ENCODE measurements at regions of chr9 and their contacts with region 1.

Region 1: GRCh38 chr9:38339087-38339486 is 53.4 kb upstream of the ALDH1B1 start:
- DNase-seq: peak; percentile 31
- ATAC-seq: peak; percentile 86
- H3K4me3 ChIP-seq: no peak overlapping the region
- H3K27ac ChIP-seq: no peak overlapping the region
- H3K4me1 ChIP-seq: no peaks in the 10 kb centered on the region
- H3K27me3 ChIP-seq: no peaks in the 10 kb centered on the region; a peak in 3 of 4 replicates
- CTCF ChIP-seq: no peak
- EP300 ChIP-seq: no peak
- POLR2A ChIP-seq: no peak
- RAD21 ChIP-seq: 0 out of 2 replicates have a peak, but pooled peaks have one; percentile 2

Region 2: DNA sequence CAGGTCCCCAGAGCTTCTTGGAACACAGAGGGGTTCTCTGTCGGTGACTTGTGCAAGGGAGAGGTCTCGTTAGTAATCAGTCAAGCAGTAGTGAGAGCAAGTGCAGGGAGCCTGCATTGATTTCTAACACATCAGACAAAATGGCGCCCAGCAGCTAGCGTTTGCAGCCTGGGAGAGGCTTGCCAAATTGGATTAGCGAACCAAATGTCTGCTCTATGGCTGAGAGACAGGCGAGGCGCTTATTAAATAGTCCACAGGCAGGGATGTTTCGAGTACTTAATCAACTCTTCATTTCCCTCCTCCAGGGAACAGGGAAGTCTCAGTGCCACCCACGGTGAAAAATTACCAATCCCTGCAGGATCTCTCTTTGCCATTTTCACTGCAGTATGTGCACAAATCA is 138.7 kb before region 1 on chr9:
- CTCF ChIA-PET with region 1: no interaction called
- POLR2A ChIA-PET with region 1: no interaction called
- RAD21 ChIA-PET with region 1: no interaction called
- SMC1A ChIA-PET with region 1: no interaction called
- in situ Hi-C with region 1: no loop called
- intact Hi-C with region 1: no loop called
- DNase-seq: no peak
- ATAC-seq: no peak
- H3K4me3 ChIP-seq: no peak overlapping the region
- H3K27ac ChIP-seq: no peak overlapping the region
- H3K4me1 ChIP-seq: no peaks in the 10 kb centered on the region; the same call in 1 of the 2 replicates
- H3K27me3 ChIP-seq: no peaks in the 10 kb centered on the region; a peak in 1 of 4 replicates
- CTCF ChIP-seq: no peak
- EP300 ChIP-seq: no peak
- POLR2A ChIP-seq: no peak
- RAD21 ChIP-seq: no peak

Region 3: GRCh38 chr9:38277601-38278200 is 61.4 kb before region 1 on chr9:
- CTCF ChIA-PET with region 1: no interaction called
- POLR2A ChIA-PET with region 1: no interaction called
- RAD21 ChIA-PET with region 1: no interaction called
- SMC1A ChIA-PET with region 1: no interaction called
- in situ Hi-C with region 1: loop called (anchors 10 kb)
- intact Hi-C with region 1: no loop called
- DNase-seq: no peak
- ATAC-seq: no peak; the same call in 2 of the 3 replicates
- H3K4me3 ChIP-seq: no peak overlapping the region
- H3K27ac ChIP-seq: no peak overlapping the region
- H3K4me1 ChIP-seq: no peaks in the 10 kb centered on the region
- H3K27me3 ChIP-seq: peaks cover 0 to 3% of the 10 kb centered on the region in 2 experiments; a peak in 2 of 4 replicates
- CTCF ChIP-seq: no peak
- EP300 ChIP-seq: no peak
- POLR2A ChIP-seq: no peak
- RAD21 ChIP-seq: no peak

Region 4: DNA sequence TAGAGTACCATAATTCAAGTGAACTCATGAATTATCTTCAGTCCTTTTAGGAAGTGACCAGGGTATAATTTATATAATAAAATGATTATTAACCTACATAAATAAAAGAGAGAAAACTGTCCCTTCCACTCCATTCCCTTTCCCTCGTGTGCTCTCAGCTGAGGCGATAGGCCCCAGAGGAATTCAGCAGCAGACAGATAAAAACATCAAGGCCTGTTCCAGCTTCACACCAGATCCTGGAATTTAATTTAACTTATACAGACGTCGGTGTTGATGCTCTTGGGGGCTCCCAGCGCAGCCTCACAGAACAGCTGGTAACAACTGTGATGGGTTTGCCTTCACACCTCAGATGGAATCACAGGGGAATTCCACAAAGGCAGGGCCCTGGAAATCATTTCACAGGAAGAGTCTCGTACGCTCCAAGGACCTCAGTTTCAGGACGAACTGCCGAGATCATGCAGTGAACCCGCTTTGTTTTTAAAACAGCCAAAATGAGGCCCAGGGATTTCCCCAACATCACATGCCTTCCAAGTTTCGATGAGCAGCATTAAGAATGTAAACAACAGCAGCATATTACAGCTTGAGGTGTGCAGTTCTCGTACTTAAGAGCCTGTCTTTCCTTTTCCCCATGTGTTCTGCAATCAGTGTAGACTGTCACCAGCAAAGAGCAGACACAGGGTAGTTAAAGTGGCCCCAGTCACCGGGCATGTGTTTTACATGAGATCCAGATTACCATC is 20.2 kb before region 1 on chr9:
- CTCF ChIA-PET with region 1: interaction called, 7 read pairs
- POLR2A ChIA-PET with region 1: no interaction called
- RAD21 ChIA-PET with region 1: no interaction called
- SMC1A ChIA-PET with region 1: interaction called, 17 read pairs
- in situ Hi-C with region 1: no loop called
- intact Hi-C with region 1: no loop called
- DNase-seq: peak; percentile 90
- ATAC-seq: peak; percentile 95
- H3K4me3 ChIP-seq: no peak overlapping the region
- H3K27ac ChIP-seq: peak overlapping the region; percentile 37
- H3K4me1 ChIP-seq: peaks cover 11% of the 10 kb centered on the region
- H3K27me3 ChIP-seq: no peaks in the 10 kb centered on the region; a peak in 1 of 4 replicates
- CTCF ChIP-seq: no peak
- EP300 ChIP-seq: peak; percentile 56 to 94
- POLR2A ChIP-seq: no peak
- RAD21 ChIP-seq: no peak

Region 5: DNA sequence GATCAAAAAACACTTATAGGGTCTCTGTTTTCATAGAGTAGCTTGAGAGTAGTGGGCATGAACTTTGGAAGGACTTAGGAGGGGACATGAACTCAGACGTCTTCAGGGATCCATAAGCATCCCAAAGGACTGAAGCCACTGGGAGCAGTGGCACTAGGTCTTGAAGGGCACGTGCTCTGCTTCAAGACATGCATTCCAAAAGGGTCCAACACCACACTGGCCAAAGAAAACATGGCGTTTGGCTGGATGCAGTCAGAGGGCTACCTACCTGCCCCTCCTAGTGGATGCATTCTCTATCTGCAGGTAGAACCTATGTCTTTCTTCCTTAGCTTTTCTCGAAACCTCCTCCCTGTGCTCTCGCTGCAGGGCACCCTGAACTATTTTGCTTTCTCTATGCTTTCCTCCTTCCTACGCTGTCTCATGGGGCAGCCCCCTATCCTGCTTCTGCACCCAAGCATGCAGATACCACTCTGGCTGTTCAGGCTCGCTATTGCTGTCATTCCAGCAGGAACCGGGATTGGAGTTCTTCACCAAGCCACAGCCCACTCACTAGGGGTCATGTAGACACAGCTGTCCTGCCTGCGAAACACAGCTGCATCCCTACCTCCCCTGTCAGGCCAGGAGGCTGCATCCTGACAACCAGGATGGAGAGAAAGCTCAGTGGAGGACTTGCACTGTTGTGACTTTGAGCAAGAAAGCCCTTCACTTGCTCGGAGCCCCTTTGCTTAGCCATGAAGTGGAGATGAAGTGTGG is 369.0 kb after region 1 on chr9:
- CTCF ChIA-PET with region 1: no interaction called
- POLR2A ChIA-PET with region 1: no interaction called
- RAD21 ChIA-PET with region 1: no interaction called
- SMC1A ChIA-PET with region 1: no interaction called
- in situ Hi-C with region 1: no loop called
- intact Hi-C with region 1: no loop called
- DNase-seq: no peak
- ATAC-seq: peak; percentile 75
- H3K4me3 ChIP-seq: no peak overlapping the region
- H3K27ac ChIP-seq: no peak overlapping the region
- H3K4me1 ChIP-seq: no peaks in the 10 kb centered on the region
- H3K27me3 ChIP-seq: no peaks in the 10 kb centered on the region
- CTCF ChIP-seq: peak; percentile 33 to 53 (median 37); a peak in 5 of 6 replicates
- EP300 ChIP-seq: no peak
- POLR2A ChIP-seq: no peak
- RAD21 ChIP-seq: peak; percentile 40